Activated naive CD4-positive, alpha-beta T cell treated with anti-CD3 and anti-CD28 coated beads for 36 hours (primary cell): ENCODE measurements at regions of chr11 and their contacts with region 1.

Region 1: DNA sequence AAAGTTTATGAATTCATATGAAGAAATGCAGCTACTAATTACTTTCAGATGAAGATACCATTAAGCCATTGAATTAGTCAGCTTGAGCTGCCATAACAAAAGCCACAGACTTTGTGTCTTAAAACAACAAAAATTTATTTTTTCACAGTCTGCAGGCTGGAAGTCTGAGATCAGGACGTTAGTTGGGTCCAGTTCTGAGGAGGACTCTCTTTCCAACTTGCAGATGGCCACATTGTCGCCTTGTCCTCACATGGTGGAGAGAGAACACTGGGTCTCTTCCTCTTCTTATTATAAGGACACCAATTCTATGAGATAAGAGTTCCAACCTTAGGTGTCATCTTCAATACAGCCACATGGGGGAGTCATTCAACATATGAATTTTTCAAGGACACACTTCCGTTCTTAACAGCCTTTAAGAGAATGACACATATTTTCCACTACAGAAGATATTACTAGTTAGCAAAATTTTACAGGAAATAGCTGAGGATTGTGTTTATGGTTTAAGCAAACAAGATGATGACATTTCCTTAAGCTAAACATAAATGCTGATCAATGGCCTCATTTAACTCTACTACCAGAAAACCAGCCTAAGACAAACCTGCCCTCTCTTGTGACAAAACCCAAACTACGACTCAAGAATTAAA is 56.0 kb downstream of the DCUN1D5 start:
- DNase-seq: peak; percentile 76
- H3K4me3 Mint-ChIP-seq: peak overlapping the region; percentile 17
- H3K27ac Mint-ChIP-seq: peak overlapping the region; percentile 90
- H3K4me1 Mint-ChIP-seq: peaks cover 26% of the 10 kb centered on the region
- H3K27me3 Mint-ChIP-seq: peaks cover 4% of the 10 kb centered on the region

Region 2: GRCh38 chr11:102476812-102477211 is 559.1 kb before region 1 on chr11:
- CTCF ChIA-PET with region 1: no interaction called
- intact Hi-C with region 1: loop called (anchors 5 kb)
- DNase-seq: peak; percentile 61
- H3K4me3 Mint-ChIP-seq: peak overlapping the region; percentile 17
- H3K27ac Mint-ChIP-seq: peak overlapping the region; percentile 75
- H3K4me1 Mint-ChIP-seq: peaks cover 59% of the 10 kb centered on the region
- H3K27me3 Mint-ChIP-seq: no peaks in the 10 kb centered on the region

Region 3: GRCh38 chr11:102994105-102994504 is 41.8 kb before region 1 on chr11:
- CTCF ChIA-PET with region 1: no interaction called
- intact Hi-C with region 1: loop called (anchors 2 kb)
- DNase-seq: no peak
- H3K4me3 Mint-ChIP-seq: no peak overlapping the region
- H3K27ac Mint-ChIP-seq: no peak overlapping the region
- H3K4me1 Mint-ChIP-seq: no peaks in the 10 kb centered on the region
- H3K27me3 Mint-ChIP-seq: peaks cover 22% of the 10 kb centered on the region

Region 4: DNA sequence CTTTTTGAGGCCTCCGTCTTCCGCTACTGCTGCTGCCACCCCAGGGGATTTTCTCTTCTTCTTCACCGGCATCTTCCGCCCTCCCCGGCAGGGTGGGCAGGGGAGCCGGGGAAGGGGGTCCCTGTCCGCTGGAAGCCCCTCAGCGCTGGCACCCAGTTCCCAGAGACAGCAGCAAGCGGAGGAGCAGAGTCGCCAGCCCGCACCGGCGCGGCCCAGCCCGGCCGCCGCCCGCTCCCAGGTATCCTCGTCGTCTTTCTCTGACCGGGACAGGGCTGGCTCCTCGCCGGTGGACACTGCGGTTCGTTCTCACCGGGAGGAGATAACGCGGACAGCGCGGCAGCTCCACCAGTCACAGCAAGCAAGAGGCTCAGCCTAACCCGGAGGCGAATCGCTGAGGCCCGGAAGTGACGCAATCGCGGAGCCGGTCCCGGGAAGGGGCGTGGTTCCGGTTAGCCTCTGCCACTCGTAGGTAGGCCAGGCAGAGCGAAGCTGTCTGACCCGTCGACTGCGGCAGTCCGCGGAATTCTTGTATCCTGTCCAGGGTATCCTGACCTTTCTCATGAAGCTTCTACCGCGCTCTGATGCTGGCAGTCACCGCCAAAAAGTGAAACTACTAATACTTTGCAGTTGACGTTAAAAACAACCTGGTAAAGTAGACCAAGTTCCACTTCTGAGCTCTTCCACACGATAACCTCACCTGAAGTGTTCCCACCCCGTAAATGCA is 56.0 kb after region 1 on chr11 and contains the start of gene DCUN1D5:
- CTCF ChIA-PET with region 1: interaction called, 4 read pairs
- intact Hi-C with region 1: loop called (anchors 1 kb)
- DNase-seq: peak; percentile 98
- H3K4me3 Mint-ChIP-seq: peak within 1 kb of the TSS; percentile 80
- H3K27ac Mint-ChIP-seq: peak within 1 kb of the TSS; percentile 81
- H3K4me1 Mint-ChIP-seq: peaks cover 22% of the 10 kb centered on the region
- H3K27me3 Mint-ChIP-seq: peaks cover 2% of the 10 kb centered on the region
- total RNA-seq, gene DCUN1D5: 52.6 to 58.4 TPM

Region 5: DNA sequence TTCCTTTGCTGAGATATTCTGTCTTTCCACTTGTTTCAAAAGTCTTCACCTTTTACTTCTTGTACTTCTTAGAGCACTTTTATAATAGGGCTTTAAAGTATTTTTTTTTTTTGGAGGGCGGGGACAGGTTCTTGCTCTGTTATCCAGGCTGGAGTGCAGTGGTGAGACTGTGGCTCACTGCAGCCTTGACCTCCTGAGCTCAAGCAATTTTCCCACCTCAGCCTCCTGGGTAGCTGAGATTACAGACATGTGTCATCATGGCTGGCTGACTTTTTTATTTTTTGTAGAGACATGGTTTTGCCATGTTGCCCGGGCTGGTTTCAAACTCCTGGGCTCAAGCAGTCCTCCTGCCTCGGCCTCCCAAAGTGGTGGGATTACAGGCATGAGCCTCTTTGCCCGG is 131.3 kb after region 1 on chr11:
- CTCF ChIA-PET with region 1: no interaction called
- intact Hi-C with region 1: no loop called
- DNase-seq: no peak
- H3K4me3 Mint-ChIP-seq: no peak overlapping the region
- H3K27ac Mint-ChIP-seq: no peak overlapping the region
- H3K4me1 Mint-ChIP-seq: no peaks in the 10 kb centered on the region
- H3K27me3 Mint-ChIP-seq: no peaks in the 10 kb centered on the region

Region 6: DNA sequence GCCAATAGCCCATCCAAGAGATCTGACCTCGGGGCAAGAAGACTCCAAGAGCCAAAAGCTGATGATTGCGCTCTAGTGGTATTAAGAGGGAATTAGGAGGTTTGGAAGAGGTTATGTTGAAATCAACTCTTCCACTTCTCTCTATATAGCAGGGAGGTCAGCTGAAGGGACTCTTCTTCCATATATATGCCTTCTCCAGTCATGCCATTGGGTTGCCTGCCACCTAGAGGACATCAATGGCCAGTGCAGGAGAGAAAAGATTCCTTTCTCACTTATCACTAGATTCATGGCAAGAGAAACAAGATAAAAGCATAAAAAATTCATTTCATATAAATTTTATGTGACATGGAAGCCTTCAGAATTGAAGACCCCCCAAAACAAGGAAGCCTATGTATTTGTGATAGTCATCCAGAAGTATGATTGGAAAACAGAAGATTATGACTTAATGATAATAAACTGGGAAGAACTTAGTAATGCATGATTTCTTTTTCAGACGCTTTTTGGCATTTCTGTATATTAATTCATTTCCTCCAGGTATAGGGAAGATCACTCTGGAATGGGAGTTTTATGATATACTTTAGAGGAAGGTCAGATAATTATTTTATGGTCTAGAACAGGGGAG is 565.4 kb after region 1 on chr11:
- CTCF ChIA-PET with region 1: interaction called, 4 read pairs
- intact Hi-C with region 1: loop called (anchors 1 kb)
- DNase-seq: peak; percentile 49
- H3K4me3 Mint-ChIP-seq: no peak overlapping the region
- H3K27ac Mint-ChIP-seq: no peak overlapping the region
- H3K4me1 Mint-ChIP-seq: no peaks in the 10 kb centered on the region
- H3K27me3 Mint-ChIP-seq: peaks cover 9% of the 10 kb centered on the region